HEK293T (cell line): ENCODE measurements at regions of chr1 and their contacts with region 1.

Region 1: DNA sequence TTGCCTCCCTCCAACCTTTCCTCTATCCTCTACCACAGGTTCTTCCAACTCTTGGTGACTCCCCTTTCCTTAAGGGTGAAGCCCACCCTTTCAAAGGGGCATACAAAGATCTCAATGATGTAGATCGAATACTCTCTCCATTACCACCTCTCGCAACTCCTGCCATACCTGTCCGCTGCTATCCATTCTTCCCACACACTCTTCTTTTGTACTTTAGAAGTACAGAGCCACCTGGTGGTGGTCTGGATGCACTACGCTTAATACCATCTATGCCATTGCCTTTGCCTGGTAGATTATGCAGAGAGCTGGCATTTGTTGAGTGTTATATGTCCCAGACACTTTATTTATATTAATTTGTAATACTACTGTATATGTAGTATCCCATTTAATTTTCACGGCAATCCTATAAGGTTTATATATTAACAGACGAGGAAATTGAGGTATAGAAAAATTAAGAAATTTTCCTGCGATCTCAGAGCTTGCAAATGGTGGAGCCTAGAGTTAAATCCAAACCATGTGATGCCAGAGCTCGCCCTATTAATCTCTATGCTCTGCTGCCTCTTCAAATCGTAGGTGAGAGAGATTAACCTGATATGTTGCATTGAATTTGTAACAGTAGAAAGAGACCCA is 22.9 kb downstream of the TSHB start:
- DNase-seq: peak; percentile 76

Region 2: DNA sequence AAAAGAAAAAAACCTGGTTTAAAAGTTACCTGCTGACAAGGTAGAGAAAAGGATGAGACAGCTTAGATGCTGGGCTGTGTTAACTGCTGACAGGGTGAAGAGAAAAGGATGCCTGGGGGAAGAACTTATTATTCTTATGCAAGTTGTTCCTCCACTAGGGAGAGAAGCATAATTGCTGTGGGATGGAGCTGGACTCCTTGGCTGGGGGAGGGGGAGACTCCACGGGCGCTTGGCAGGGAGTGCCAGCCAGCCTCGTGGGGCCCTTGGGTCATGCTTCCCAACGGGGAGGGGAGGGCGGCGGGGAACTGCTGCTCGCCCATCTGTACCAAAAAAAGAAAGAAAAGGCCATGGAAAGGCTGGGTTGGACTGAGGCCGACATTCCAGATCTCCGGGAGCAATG is 150.8 kb before region 1 on chr1:
- CTCF ChIA-PET with region 1: no interaction called
- POLR2A ChIA-PET with region 1: no interaction called
- DNase-seq: no peak

Region 3: DNA sequence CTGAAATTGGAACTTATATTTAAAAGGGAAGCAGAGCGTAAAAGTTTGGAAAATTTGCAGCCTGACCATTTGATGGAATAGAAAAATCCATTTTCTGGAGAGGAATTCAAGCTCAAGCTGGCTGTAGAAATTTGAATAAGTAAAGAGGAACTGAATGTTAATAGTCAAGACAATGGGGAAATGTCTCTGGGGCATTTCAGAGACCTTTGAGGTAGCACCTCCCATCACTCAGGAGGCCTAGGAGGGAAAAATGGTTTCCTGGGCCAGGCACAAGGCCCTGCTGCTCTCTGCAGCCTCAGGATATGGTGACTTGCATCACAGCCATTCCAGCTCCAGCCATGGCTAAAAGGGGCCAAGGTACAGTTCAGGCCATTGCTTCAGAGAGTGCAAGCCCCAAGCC is 40.6 kb before region 1 on chr1:
- CTCF ChIA-PET with region 1: no interaction called
- POLR2A ChIA-PET with region 1: no interaction called
- DNase-seq: no peak

Region 4: GRCh38 chr1:115041654-115042053 is 10.9 kb before region 1 on chr1:
- CTCF ChIA-PET with region 1: interaction called, 13 read pairs
- POLR2A ChIA-PET with region 1: no interaction called
- DNase-seq: peak; percentile 50

Region 5: GRCh38 chr1:115082949-115083348 is 30.4 kb after region 1 on chr1:
- CTCF ChIA-PET with region 1: interaction called, 10 read pairs
- POLR2A ChIA-PET with region 1: no interaction called
- DNase-seq: no peak